ENCODE measurements at regions of chr12 and their contacts with region 1.

Region 1: DNA sequence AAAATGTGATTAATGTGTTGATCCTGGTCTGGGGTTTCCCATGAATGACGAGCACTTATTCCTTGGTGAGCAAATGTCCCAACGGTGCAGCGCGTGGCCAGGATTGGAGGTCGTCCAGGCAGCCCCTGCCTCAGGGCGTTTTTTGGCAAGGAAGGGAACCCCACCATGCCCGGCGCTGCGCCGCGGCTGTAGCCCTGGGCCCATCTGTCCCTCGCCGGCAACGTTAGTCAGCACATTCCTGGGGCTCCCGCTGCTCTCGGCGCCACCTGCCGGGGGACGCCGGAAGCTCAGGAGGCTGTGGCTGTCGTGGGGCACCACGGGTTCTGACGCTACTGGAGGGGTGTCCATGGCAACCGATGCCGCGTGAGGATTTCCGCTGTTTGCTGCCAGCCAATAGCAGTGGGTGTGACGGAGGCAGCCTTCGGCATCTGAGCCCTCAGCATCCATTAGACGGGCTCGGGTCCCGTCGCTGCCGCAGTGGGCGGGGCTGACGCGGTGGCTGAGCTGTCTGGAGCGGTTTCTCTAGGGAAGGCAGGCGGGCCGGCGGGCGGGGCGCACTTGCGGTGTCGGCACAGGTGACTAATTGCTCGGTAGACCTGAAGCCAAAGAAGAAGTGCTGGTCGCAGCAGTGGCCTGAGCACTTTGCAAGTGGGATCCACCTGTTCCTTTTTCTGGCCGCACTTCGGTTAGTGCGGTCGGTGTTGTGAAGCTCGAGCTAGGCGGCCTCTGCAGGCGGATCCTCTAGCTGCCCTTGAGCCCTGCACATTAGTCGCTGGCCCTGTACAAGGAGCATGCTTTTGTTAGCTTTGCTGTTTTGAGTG is 29.5 kb downstream of the RAB35 start:
- DNase-seq: peak; percentile 100
- ATAC-seq: peak; percentile 95
- H3K4me3 ChIP-seq: peak overlapping the region; percentile 60
- H3K27ac ChIP-seq: peak overlapping the region; percentile 74
- H3K4me1 ChIP-seq: peaks cover 16% of the 10 kb centered on the region
- H3K27me3 ChIP-seq: no peaks in the 10 kb centered on the region
- CTCF ChIP-seq: peak; percentile 97

Region 2: DNA sequence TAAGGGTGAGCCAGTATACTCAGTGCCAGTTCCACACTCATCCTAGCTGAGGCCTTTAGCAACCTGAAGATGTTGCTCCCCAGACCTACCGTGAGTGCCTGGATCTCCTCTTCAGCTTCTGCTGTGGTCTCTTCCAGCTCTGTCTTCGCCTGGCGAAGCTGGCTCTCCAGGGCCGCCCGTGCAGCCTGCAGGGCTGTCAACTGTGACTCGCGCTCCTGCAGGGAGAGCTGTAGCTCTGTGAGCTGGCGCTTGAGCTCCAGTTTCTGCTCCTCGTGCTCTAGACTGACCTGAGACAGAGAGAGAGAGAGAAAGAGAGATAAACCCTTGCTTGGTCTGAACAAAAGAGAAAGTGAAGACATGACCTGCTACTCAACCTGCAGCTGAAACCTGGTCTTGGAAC is 335.1 kb before region 1 on chr12:
- CTCF ChIA-PET with region 1: no interaction called
- POLR2A ChIA-PET with region 1: no interaction called
- intact Hi-C with region 1: no loop called
- DNase-seq: no peak
- ATAC-seq: peak; percentile 33; the same call in 1 of the 2 replicates
- H3K4me3 ChIP-seq: no peak overlapping the region
- H3K27ac ChIP-seq: no peak overlapping the region
- H3K4me1 ChIP-seq: no peaks in the 10 kb centered on the region
- H3K27me3 ChIP-seq: no peaks in the 10 kb centered on the region
- CTCF ChIP-seq: no peak

Region 3: DNA sequence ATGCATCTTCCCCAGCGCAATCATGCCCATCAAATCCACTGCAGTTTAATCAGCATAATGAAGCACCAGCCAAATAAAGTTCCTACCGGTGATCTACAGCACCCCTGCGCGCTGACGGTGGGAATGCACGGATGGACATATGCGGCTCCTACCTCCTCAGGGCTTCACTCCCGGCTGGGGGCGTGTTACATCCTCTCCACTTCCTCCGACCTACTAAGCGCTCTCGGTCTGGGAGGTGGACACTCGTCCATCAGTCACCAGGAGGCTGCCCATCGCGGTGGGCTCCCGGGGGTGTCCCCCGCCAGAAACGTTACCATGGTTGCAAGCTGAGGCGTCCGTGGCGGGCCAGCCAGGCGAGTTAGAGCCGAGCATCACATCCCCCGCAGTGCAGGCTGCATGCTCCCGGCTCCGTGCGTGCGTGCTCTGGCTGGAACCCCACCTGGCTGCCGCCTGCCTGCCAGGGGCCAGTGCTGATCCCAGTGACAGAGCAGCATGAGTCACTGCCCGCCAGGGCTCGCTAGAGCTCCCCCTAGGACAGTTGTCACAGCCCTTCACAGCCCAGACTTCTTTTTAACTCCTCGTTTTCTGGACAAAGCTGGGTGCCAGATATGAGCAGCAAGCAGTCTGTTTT is 282.9 kb before region 1 on chr12:
- CTCF ChIA-PET with region 1: no interaction called
- POLR2A ChIA-PET with region 1: no interaction called
- intact Hi-C with region 1: loop called (anchors 5 kb)
- DNase-seq: peak; percentile 87
- ATAC-seq: peak; percentile 94
- H3K4me3 ChIP-seq: no peak overlapping the region
- H3K27ac ChIP-seq: no peak overlapping the region
- H3K4me1 ChIP-seq: peaks cover 30% of the 10 kb centered on the region
- H3K27me3 ChIP-seq: no peaks in the 10 kb centered on the region
- CTCF ChIP-seq: peak; percentile 86

Region 4: GRCh38 chr12:119938049-119938667 is 148.9 kb before region 1 on chr12:
- CTCF ChIA-PET with region 1: interaction called, 6 read pairs
- POLR2A ChIA-PET with region 1: no interaction called
- intact Hi-C with region 1: loop called (anchors 1 kb)
- DNase-seq: peak; percentile 86
- ATAC-seq: peak; percentile 22; the same call in 1 of the 2 replicates
- H3K4me3 ChIP-seq: no peak overlapping the region
- H3K27ac ChIP-seq: no peak overlapping the region
- H3K4me1 ChIP-seq: peaks cover 14% of the 10 kb centered on the region
- H3K27me3 ChIP-seq: no peaks in the 10 kb centered on the region
- CTCF ChIP-seq: peak; percentile 85

Region 5: DNA sequence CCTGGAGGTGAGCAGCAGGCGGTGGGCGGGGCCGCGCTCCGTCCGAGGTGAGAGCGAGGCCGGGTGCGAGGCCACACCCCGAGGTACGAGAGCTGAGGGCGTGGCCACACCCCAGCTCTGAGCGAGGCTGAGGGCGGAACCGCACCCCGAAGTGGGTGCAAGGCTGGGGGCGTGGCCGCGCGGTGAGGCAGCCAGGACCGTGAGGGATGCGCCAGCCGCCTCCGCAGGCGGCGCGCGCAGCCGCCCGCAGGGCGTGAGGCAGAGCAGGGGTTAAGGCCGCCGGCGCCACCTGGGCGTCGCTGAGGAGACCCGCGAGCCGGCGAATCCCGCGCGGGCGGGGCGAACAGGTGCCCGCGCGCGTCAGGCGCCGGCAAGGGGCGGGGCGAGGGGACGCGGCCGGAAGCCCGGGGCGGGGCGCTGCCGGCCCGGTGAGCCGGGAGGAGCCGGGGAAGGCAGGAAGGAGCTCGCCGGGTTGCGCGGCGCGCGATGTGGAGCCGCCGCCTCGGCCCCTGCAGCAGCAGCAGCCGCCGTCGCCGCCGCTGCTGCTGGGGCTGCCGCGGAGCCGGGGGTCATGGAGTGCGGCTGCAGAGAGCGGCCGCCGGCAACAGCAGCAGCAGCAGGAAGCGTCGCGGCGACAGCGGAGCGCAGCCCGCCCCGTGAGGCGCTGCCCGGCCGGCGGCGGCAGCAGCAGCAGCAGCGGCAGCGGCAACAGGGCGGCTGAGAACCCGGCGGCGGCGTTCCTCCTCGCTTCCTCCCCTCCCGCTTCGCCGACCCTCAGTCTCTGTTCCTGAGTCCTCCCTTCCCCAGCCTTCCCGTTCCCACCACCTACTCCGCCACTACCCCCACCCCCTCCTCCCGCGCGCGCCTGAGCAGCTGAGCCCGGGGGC is 98.0 kb before region 1 on chr12 and contains the start of gene BICDL1:
- CTCF ChIA-PET with region 1: interaction called, 9 read pairs
- POLR2A ChIA-PET with region 1: interaction called, 5 read pairs
- intact Hi-C with region 1: loop called (anchors 1 kb)
- DNase-seq: peak; percentile 96
- ATAC-seq: peak; percentile 79
- H3K4me3 ChIP-seq: peak within 1 kb of the TSS; percentile 71
- H3K27ac ChIP-seq: no peak within 1 kb of the TSS
- H3K4me1 ChIP-seq: peaks cover 17% of the 10 kb centered on the region
- H3K27me3 ChIP-seq: peaks cover 19% of the 10 kb centered on the region
- CTCF ChIP-seq: no peak
- total RNA-seq, gene BICDL1: 3.6 and 5.8 TPM in 2 replicates

Region 6: GRCh38 chr12:120012067-120012621 is 74.9 kb before region 1 on chr12:
- CTCF ChIA-PET with region 1: no interaction called
- POLR2A ChIA-PET with region 1: interaction called, 3 read pairs
- intact Hi-C with region 1: loop called (anchors 1 kb)
- DNase-seq: peak; percentile 70
- ATAC-seq: peak; percentile 80
- H3K4me3 ChIP-seq: no peak overlapping the region
- H3K27ac ChIP-seq: no peak overlapping the region
- H3K4me1 ChIP-seq: peaks cover 15% of the 10 kb centered on the region
- H3K27me3 ChIP-seq: no peaks in the 10 kb centered on the region
- CTCF ChIP-seq: no peak

Region 7: GRCh38 chr12:120019938-120020337 is 67.1 kb before region 1 on chr12:
- CTCF ChIA-PET with region 1: no interaction called
- POLR2A ChIA-PET with region 1: interaction called, 3 read pairs
- intact Hi-C with region 1: loop called (anchors 1 kb)
- DNase-seq: no peak
- ATAC-seq: peak; percentile 24; the same call in 1 of the 2 replicates
- H3K4me3 ChIP-seq: no peak overlapping the region
- H3K27ac ChIP-seq: peak overlapping the region; percentile 37; the same call in 1 of the 2 replicates
- H3K4me1 ChIP-seq: peaks cover 6% of the 10 kb centered on the region; the same call in 1 of the 2 replicates
- H3K27me3 ChIP-seq: no peaks in the 10 kb centered on the region
- CTCF ChIP-seq: no peak

Measured in PC-3 (cell line).